Activated naive CD4-positive, alpha-beta T cell treated with anti-CD3 and anti-CD28 coated beads for 36 hours (primary cell): ENCODE measurements at regions of chr12 and their contacts with region 1.

Region 1: GRCh38 chr12:52879394-52880351 is 25.2 kb downstream of the KRT8 start:
- DNase-seq: peak; percentile 84
- H3K4me3 Mint-ChIP-seq: peak overlapping the region; percentile 69
- H3K27ac Mint-ChIP-seq: no peak overlapping the region
- H3K4me1 Mint-ChIP-seq: peaks cover 7% of the 10 kb centered on the region
- H3K27me3 Mint-ChIP-seq: no peaks in the 10 kb centered on the region

Region 2: GRCh38 chr12:52156736-52157565 is 722.7 kb before region 1 on chr12:
- CTCF ChIA-PET with region 1: interaction called, 23 read pairs
- intact Hi-C with region 1: loop called (anchors 1 kb)
- DNase-seq: peak; percentile 83
- H3K4me3 Mint-ChIP-seq: no peak overlapping the region
- H3K27ac Mint-ChIP-seq: no peak overlapping the region
- H3K4me1 Mint-ChIP-seq: peaks cover 26% of the 10 kb centered on the region
- H3K27me3 Mint-ChIP-seq: no peaks in the 10 kb centered on the region

Region 3: DNA sequence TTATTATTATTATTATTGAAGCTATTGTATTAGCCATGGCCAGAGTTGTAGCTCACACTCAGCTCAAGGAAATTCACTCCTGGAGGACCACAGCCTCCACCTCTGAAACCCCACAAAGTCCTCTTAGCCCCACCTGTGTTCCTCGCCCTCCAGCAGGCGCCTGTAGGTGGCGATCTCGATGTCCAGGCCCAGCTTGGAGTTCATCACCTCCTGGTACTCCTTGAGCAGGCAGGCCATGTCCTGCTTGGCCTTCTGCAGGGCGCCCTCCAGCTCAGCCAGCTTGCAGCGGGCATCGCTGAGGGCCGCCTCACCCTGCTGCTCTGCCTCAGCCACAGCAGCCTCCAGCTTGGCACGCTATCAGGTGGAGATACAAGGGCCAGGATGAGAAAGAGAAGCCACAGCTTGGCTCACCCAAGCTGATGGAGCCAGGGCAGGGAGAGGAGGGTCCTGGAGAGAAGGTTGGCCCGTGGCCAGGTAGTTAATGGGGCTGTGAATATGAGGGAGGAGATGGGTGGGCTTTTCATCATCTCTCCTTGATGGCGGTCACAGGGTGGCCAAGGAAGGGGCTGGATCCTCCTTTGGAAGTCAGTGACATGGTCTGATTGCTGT is 517.5 kb before region 1 on chr12:
- CTCF ChIA-PET with region 1: interaction called, 11 read pairs
- intact Hi-C with region 1: no loop called
- DNase-seq: peak; percentile 14
- H3K4me3 Mint-ChIP-seq: no peak overlapping the region
- H3K27ac Mint-ChIP-seq: no peak overlapping the region
- H3K4me1 Mint-ChIP-seq: peaks cover 20% of the 10 kb centered on the region
- H3K27me3 Mint-ChIP-seq: no peaks in the 10 kb centered on the region

Region 4: DNA sequence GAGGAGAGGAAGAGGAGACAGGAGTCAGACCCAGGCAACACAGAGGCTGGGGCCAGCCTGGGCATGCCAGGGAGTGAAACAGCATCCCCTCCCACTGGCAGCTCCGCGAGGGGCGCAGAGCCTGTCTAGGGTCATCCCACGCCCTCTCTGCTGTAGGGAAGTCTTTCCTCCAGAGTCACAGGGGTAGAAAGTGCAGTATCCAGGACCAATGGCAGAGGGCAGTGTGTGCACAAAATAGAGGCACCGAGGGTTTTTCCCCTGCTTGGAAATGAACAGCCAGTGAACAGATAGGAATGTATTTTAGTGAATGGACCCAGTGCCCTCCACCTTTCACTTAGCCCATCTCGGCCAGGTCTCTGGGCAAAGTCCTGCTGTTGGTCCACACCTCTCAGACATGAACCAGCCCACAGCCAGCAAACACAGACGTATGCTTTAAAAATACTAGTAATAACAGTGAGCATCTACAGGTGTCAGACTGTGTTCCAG is 296.7 kb before region 1 on chr12:
- CTCF ChIA-PET with region 1: interaction called, 126 read pairs
- intact Hi-C with region 1: loop called (anchors 1 kb)
- DNase-seq: peak; percentile 84
- H3K4me3 Mint-ChIP-seq: no peak overlapping the region
- H3K27ac Mint-ChIP-seq: no peak overlapping the region
- H3K4me1 Mint-ChIP-seq: peaks cover 49% of the 10 kb centered on the region
- H3K27me3 Mint-ChIP-seq: no peaks in the 10 kb centered on the region

Region 5: GRCh38 chr12:52691076-52691840 is 188.4 kb before region 1 on chr12:
- CTCF ChIA-PET with region 1: interaction called, 10 read pairs
- intact Hi-C with region 1: no loop called
- DNase-seq: peak; percentile 73
- H3K4me3 Mint-ChIP-seq: peak overlapping the region; percentile 70
- H3K27ac Mint-ChIP-seq: no peak overlapping the region
- H3K4me1 Mint-ChIP-seq: peaks cover 25% of the 10 kb centered on the region
- H3K27me3 Mint-ChIP-seq: no peaks in the 10 kb centered on the region

Region 6: DNA sequence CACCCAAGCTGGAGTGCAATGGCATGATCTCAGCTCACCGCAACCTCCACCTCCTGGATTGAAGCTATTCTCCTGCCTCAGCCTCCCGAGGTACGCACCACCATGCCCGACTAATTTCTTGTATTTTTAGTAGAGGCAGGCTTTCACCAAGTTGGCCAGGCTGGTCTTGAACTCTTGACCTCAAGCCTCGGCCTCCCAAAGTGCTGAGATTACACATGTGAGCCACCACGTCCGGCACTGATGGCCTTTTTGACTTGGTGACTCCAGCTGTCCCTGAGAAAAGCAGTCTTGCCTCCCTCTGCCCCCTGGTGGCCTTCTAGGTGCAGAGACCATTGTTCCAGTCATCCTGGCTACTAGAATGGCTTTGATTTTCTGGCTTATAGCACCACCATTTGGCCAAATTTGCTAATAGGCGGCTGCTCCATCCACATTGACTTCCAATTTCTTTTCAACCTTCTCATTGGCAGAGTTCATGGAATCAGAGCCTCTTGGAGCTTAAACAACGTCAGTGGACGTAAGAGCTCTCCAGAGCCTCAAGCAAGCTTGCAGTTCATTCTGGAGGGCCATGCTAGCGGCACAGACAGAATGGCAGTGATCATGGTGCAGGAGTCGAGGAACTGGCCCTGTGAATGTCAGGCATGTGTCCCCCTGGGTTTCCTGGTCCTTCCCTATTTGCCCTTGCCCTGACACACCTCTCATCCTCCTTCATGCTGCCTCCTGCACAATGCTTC is 101.2 kb after region 1 on chr12:
- CTCF ChIA-PET with region 1: interaction called, 369 read pairs
- intact Hi-C with region 1: loop called (anchors 1 kb)
- DNase-seq: peak; percentile 92
- H3K4me3 Mint-ChIP-seq: no peak overlapping the region
- H3K27ac Mint-ChIP-seq: no peak overlapping the region
- H3K4me1 Mint-ChIP-seq: no peaks in the 10 kb centered on the region
- H3K27me3 Mint-ChIP-seq: peaks cover 11% of the 10 kb centered on the region

Region 7: DNA sequence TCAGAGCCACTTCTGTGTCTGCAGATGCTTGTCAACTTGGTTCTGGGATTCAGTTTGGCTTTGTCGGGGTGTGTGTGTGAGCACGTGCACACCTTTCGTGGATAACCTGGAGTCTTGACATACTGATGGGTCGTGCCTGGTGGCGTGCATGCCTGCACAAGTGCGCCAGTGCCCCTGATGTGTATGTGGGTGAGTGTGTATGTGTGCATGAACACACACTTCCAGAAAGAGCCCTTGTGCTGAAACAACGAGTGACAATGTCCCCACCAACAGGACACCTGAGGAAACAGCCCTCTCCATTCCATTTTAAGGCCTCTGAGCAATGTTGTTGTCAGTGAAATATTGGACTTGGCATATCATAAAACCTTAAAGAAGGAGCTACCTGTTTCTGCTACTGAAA is 1255.2 kb after region 1 on chr12:
- CTCF ChIA-PET with region 1: no interaction called
- intact Hi-C with region 1: no loop called
- DNase-seq: no peak
- H3K4me3 Mint-ChIP-seq: no peak overlapping the region
- H3K27ac Mint-ChIP-seq: no peak overlapping the region
- H3K4me1 Mint-ChIP-seq: no peaks in the 10 kb centered on the region
- H3K27me3 Mint-ChIP-seq: peaks cover 25% of the 10 kb centered on the region